GM13976 (cell line): ENCODE measurements at regions of chr12 and their contacts with region 1.

Region 1: DNA sequence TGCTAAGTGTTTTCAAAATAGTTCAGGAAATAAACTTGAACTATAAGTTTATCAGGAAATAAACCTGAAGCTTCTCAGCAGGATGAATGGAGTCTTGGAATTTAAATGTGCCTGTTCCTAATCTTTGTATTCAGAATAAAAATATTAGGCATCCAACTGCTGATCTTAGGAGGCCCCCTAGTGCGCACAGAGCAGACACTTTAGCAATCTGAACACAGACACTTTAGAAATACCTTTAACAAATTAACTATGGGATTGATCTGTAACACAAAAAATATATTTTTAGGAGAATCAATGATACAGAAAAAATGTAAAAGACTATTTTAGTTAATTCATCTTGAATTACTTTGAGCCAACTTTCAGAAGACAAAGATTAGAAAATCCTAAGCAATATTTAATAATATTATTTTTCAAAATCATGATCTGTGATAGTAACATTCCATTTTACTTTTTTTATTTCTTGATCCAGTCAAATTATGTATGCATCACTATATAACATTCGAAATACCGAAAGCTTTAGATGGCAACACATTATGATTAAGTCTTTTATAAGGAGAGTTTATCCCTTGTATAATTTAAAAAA is 80.9 kb downstream of the SLC41A2 start:
- DNase-seq: peak; percentile 42
- CTCF ChIP-seq: peak; percentile 69

Region 2: DNA sequence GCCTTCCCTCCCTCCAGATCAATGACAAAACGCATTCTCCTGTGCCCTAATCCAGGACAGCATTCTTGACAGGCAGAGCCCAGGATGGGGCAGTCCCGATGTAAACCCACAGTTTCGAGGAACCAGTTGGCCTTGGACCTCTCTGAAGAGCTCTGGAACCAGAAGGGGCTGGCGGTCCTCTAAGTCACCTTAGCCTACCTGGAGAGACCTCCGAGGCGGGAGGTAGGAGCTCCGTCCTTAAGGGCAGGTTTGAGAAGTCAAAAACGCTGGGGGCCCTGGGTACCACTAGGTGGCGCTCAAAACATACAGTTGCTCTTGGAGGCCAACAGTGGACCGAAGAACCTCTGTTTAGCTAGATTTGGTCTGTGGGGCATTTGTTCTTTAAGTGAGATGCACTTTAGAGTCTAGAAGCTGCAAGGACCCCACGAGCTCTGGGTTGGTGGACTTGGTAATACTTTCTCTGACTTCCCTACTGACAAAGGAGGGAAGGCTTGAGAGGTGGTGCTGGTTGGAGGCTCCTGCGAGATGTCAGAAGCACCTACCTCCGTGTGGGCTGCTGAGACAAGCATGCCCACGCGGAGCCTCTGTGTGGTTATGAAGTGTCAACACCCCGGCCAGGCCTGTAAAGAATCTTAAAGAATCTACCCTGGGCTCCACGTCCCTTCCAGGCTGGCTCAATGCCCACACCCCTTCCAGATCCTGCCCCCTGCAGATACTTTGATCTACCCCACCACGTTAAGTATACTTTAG is 495.3 kb before region 1 on chr12:
- in situ Hi-C with region 1: loop called (anchors 10 kb)
- DNase-seq: peak; percentile 80
- CTCF ChIP-seq: peak; percentile 74

Region 3: DNA sequence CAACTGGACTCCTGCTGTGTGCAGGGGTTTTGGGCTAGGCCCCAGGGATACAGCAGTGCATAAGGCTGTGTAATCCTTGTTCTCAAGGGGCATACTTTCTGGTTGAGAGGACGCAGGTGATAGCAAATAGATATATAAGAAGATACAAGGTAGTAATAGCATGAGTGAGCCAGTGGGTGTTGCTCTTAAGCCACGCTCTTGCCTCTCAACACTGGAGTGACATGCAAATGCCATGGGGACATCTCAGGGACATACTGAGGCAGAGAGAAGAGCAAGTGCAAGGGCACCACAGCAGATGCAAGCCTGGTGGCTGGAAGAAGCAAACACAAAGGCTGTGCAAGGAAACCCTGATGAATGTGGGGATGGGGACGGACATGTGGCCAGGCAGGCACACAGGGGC is 197.1 kb before region 1 on chr12:
- in situ Hi-C with region 1: loop called (anchors 10 kb)
- DNase-seq: peak; percentile 55
- CTCF ChIP-seq: peak; percentile 42

Region 4: GRCh38 chr12:104930388-104931326 is 53.4 kb after region 1 on chr12:
- in situ Hi-C with region 1: no loop called
- DNase-seq: peak; percentile 57
- CTCF ChIP-seq: no peak